ENCODE measurements at regions of chr4 and their contacts with region 1.

Region 1: GRCh38 chr4:75469896-75470295 is 44.3 kb downstream of the RCHY1 start:
- DNase-seq: no peak
- H3K4me3 ChIP-seq: no peak overlapping the region
- H3K27ac ChIP-seq: no peak overlapping the region
- H3K4me1 ChIP-seq: no peaks in the 10 kb centered on the region
- H3K27me3 ChIP-seq: no peaks in the 10 kb centered on the region
- CTCF ChIP-seq: no peak
- EP300 ChIP-seq: no peak
- POLR2A ChIP-seq: no peak
- RAD21 ChIP-seq: no peak

Region 2: DNA sequence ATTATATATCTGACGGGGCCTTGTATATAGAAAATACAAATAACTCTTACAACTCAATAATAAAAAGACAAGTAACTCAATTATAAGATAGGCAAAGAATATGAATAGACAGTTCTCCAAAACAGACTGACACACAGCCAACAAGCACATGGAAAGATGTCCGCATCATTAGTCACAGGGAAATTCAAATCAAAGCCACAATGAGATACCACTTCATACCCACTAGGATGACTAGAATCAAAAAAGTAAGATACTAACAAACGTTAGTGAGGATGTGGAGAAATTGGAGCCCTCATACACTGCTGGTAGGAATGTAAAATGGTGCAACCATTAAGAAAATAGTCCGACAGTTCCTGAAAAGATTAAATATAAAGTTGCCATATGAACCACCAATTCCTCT is 71.4 kb before region 1 on chr4:
- CTCF ChIA-PET with region 1: no interaction called
- POLR2A ChIA-PET with region 1: no interaction called
- DNase-seq: no peak
- H3K4me3 ChIP-seq: no peak overlapping the region
- H3K27ac ChIP-seq: no peak overlapping the region
- H3K4me1 ChIP-seq: no peaks in the 10 kb centered on the region
- H3K27me3 ChIP-seq: no peaks in the 10 kb centered on the region
- CTCF ChIP-seq: no peak
- EP300 ChIP-seq: no peak
- POLR2A ChIP-seq: no peak
- RAD21 ChIP-seq: no peak

Region 3: DNA sequence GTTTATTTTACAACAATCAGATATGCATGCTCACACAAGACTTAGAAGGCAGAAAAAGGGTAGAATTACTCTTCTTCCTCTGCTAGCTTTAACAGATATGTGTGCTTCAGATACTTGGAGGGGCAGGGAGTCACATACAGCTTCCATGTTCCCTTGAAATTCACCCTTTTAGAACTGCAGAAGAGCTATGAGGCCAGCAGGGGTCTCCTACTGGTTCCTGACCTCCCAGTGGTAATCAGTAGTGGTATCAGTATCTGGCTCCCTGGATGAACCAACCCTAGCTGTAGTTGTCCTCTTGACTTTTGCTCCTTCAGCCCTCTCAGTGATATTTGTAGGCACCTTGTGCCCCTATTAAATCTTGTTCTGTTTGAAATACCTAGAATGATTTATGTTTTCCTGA is 37.2 kb before region 1 on chr4:
- CTCF ChIA-PET with region 1: interaction called, 10 read pairs
- POLR2A ChIA-PET with region 1: no interaction called
- DNase-seq: no peak
- H3K4me3 ChIP-seq: no peak overlapping the region
- H3K27ac ChIP-seq: no peak overlapping the region
- H3K4me1 ChIP-seq: no peaks in the 10 kb centered on the region
- H3K27me3 ChIP-seq: no peaks in the 10 kb centered on the region
- CTCF ChIP-seq: peak; percentile 29 to 78 (median 72)
- EP300 ChIP-seq: no peak
- POLR2A ChIP-seq: no peak
- RAD21 ChIP-seq: peak; percentile 58 to 69

Region 4: GRCh38 chr4:75525910-75526309 is 56.0 kb after region 1 on chr4:
- CTCF ChIA-PET with region 1: no interaction called
- POLR2A ChIA-PET with region 1: no interaction called
- DNase-seq: no peak
- H3K4me3 ChIP-seq: no peak overlapping the region
- H3K27ac ChIP-seq: no peak overlapping the region
- H3K4me1 ChIP-seq: no peaks in the 10 kb centered on the region
- H3K27me3 ChIP-seq: peaks cover 0 to 1% (median 0%) of the 10 kb centered on the region in 4 experiments; a peak in 1 of 7 replicates
- CTCF ChIP-seq: no peak
- EP300 ChIP-seq: no peak
- POLR2A ChIP-seq: no peak
- RAD21 ChIP-seq: no peak